Activated CD4-positive, alpha-beta T cell treated with anti-CD3 and anti-CD28 coated beads for 36 hours (primary cell): ENCODE measurements at regions of chr11 and their contacts with region 1.

Region 1: GRCh38 chr11:57667736-57668435 is at the start of gene ZDHHC5:
- DNase-seq: peak; percentile 100
- ATAC-seq: peak; percentile 88
- H3K4me3 Mint-ChIP-seq: peak within 1 kb of the TSS; percentile 99
- H3K27ac Mint-ChIP-seq: peak within 1 kb of the TSS; percentile 99
- H3K4me1 Mint-ChIP-seq: peaks cover 37% of the 10 kb centered on the region
- H3K27me3 Mint-ChIP-seq: no peaks in the 10 kb centered on the region
- total RNA-seq, gene ZDHHC5: 46.2 to 60.0 TPM

Region 2: DNA sequence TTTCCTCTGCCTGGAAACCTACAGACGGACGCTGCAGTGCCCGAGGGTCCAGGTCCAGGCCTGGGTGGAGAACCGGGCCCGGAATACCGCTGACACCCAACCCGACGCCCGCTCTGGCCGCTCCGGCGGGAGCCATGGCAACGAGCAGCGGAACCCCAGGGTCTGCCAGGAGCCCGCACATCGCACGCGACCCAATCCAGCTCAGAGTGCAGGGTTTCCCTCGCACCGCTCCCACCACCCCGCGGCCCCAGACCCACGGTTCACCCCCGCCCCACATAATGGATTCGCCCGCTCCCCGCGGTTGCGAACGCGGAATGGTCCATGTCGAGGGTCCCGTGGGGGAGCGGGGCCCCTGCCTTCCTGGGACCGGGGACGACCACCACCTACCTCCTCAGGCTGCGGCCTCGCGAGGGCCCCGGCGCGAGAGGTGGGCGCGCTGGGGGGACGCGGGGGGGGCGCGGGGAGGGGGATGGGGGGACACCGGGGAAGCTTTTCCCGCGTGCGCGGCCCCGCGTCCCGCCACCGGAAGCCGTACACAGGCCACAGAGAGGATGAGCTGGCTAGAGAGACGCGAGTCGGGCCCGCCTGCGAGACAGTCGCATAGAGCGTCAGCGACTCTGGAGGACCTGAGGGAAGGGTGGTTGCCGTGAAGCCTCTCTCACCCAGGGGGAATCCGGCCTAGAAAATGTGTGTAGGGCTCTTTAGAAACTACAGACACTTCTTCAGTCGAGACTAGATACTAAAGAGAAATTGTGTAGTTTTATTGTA is 332.4 kb before region 1 on chr11 and contains the start of gene SSRP1:
- CTCF ChIA-PET with region 1: no interaction called
- POLR2A ChIA-PET with region 1: no interaction called
- intact Hi-C with region 1: loop called (anchors 1 to 5 kb)
- DNase-seq: peak; percentile 93
- ATAC-seq: peak; percentile 99
- H3K4me3 Mint-ChIP-seq: peak within 1 kb of the TSS; percentile 97
- H3K27ac Mint-ChIP-seq: peak within 1 kb of the TSS; percentile 100
- H3K4me1 Mint-ChIP-seq: peaks cover 43% of the 10 kb centered on the region
- H3K27me3 Mint-ChIP-seq: no peaks in the 10 kb centered on the region
- total RNA-seq, gene SSRP1: 279 to 296 TPM

Region 3: GRCh38 chr11:57649826-57650738 is 17.8 kb before region 1 on chr11 and contains the start of gene YPEL4:
- CTCF ChIA-PET with region 1: no interaction called
- POLR2A ChIA-PET with region 1: no interaction called
- intact Hi-C with region 1: no loop called
- DNase-seq: peak; percentile 76
- ATAC-seq: peak; percentile 75
- H3K4me3 Mint-ChIP-seq: peak within 1 kb of the TSS; percentile 68
- H3K27ac Mint-ChIP-seq: peak within 1 kb of the TSS; percentile 52
- H3K4me1 Mint-ChIP-seq: peaks cover 43% of the 10 kb centered on the region
- H3K27me3 Mint-ChIP-seq: peaks cover 39% of the 10 kb centered on the region
- total RNA-seq, gene YPEL4: 0.43 to 0.47 TPM

Region 4: GRCh38 chr11:57712256-57713150 is 44.6 kb after region 1 on chr11 and contains the start of gene TMX2:
- CTCF ChIA-PET with region 1: interaction called, 3 read pairs
- POLR2A ChIA-PET with region 1: interaction called, 3 read pairs
- intact Hi-C with region 1: loop called (anchors 1 kb)
- DNase-seq: peak; percentile 94
- ATAC-seq: peak; percentile 93
- H3K4me3 Mint-ChIP-seq: peak within 1 kb of the TSS; percentile 97
- H3K27ac Mint-ChIP-seq: peak within 1 kb of the TSS; percentile 97
- H3K4me1 Mint-ChIP-seq: peaks cover 50% of the 10 kb centered on the region
- H3K27me3 Mint-ChIP-seq: no peaks in the 10 kb centered on the region
- total RNA-seq, gene TMX2: 59.8 to 72.5 TPM

Region 5: DNA sequence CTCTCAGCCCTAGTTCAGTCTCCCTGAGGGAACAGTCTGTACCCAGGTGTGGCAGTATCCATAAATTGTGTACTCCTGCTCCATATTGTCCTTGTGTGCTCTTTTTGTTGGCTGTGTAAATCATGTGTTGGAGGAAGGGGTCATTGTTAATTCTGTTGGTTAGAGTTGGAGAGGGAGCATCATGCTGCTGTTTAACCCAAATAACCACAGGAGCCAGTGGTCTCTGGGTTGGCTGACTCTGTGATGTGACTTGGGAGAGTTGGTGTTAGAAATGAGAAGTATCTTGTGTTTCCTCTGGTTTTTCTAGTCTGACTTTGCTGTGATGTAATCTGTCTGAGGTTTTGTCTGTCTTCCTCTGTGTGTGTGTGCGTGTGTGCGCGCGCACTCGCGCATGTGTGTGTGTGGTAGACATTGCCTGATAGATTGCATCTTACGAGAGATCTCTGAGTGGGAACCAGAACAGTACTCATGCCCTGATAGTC is 124.2 kb after region 1 on chr11:
- CTCF ChIA-PET with region 1: no interaction called
- POLR2A ChIA-PET with region 1: no interaction called
- intact Hi-C with region 1: loop called in 1 of 2 experiments (anchors 5 kb)
- DNase-seq: peak; percentile 89
- ATAC-seq: peak; percentile 96
- H3K4me3 Mint-ChIP-seq: peak overlapping the region; percentile 34
- H3K27ac Mint-ChIP-seq: peak overlapping the region; percentile 89
- H3K4me1 Mint-ChIP-seq: peaks cover 33% of the 10 kb centered on the region
- H3K27me3 Mint-ChIP-seq: no peaks in the 10 kb centered on the region

Region 6: GRCh38 chr11:59615637-59616395 is 1947.9 kb after region 1 on chr11 and contains the start of gene OSBP:
- CTCF ChIA-PET with region 1: no interaction called
- POLR2A ChIA-PET with region 1: no interaction called
- intact Hi-C with region 1: loop called in 1 of 2 experiments (anchors 5 kb)
- DNase-seq: peak; percentile 98
- ATAC-seq: peak; percentile 88
- H3K4me3 Mint-ChIP-seq: peak within 1 kb of the TSS; percentile 99
- H3K27ac Mint-ChIP-seq: peak within 1 kb of the TSS; percentile 96
- H3K4me1 Mint-ChIP-seq: peaks cover 40% of the 10 kb centered on the region
- H3K27me3 Mint-ChIP-seq: no peaks in the 10 kb centered on the region
- total RNA-seq, gene OSBP: 37.9 to 44.2 TPM